A673 (cell line): ENCODE measurements at regions of chr6 and their contacts with region 1.

Region 1: DNA sequence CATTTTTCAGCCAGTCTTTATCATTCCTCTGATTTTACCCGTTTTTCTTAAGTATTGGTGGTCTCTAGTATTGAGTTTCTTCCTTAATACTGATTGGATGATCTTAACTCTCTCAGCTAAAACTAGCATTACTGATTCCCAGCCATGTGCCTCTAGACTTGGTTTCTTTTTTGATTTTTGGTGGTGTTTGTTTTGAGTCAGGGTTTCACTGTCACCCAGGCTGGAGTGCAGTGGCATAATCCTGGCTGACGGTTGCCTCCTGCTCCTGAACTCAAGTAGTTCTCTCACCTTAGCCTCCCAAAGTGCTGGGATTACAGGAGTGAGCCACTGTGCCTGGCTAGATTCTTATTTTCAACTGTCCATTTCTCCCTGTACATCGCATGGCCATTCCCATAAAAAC is 24.9 kb downstream of the DPPA5 start:
- DNase-seq: no peak
- H3K4me3 ChIP-seq: no peak overlapping the region
- H3K27ac ChIP-seq: no peak overlapping the region
- H3K4me1 ChIP-seq: no peaks in the 10 kb centered on the region
- H3K27me3 ChIP-seq: no peaks in the 10 kb centered on the region
- CTCF ChIP-seq: no peak

Region 2: GRCh38 chr6:71533939-71534379 is 1795.2 kb before region 1 on chr6:
- CTCF ChIA-PET with region 1: no interaction called
- POLR2A ChIA-PET with region 1: no interaction called
- intact Hi-C with region 1: loop called (anchors 5 kb)
- DNase-seq: peak; percentile 24
- H3K4me3 ChIP-seq: no peak overlapping the region
- H3K27ac ChIP-seq: no peak overlapping the region
- H3K4me1 ChIP-seq: no peaks in the 10 kb centered on the region
- H3K27me3 ChIP-seq: no peaks in the 10 kb centered on the region
- CTCF ChIP-seq: peak; percentile 69

Region 3: DNA sequence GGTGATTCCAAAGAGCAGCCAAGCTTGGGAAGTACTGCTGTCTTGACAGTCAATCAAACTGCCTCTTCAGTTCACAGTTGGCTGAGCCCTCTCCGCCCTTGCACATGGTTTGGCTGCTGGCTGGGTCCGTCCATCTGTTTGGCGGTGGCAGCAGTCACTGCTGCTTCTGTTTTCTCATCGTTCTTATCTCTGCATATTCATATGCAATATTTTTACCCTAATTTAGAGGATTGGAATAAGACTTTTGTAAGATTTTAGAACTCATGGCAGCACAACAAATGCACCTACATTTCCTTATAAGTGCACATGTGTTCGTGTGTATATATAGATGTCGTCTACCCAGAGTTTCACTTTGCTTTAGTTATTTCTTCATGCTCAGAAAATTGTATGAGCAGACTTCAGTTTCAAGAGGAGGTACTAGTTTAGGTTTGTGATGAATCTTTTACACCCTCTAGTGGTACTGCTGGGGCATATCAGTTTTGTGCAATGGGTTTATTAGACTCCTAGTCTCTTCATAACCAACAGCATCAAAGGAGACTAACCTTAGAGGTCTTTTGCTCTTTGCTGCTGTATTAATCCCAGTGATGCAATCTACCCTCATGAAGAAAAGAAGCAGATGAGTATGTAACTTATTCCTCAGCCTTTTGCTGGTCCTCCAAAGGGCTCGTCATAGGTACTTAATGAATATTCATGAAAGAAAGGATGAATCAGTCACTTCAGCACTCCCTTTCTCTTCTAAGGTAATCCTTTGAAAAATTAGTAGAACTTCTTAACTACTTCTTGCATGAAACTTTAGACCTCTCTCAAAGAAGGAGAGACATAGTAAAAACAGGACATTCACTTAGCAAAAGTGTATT is 148.2 kb before region 1 on chr6:
- CTCF ChIA-PET with region 1: no interaction called
- POLR2A ChIA-PET with region 1: no interaction called
- intact Hi-C with region 1: loop called (anchors 10 kb)
- DNase-seq: peak; percentile 86
- H3K4me3 ChIP-seq: peak overlapping the region; percentile 35
- H3K27ac ChIP-seq: peak overlapping the region; percentile 25
- H3K4me1 ChIP-seq: peaks cover 22% of the 10 kb centered on the region
- H3K27me3 ChIP-seq: no peaks in the 10 kb centered on the region
- CTCF ChIP-seq: peak; percentile 93

Region 4: GRCh38 chr6:73258721-73259120 is 70.5 kb before region 1 on chr6:
- CTCF ChIA-PET with region 1: no interaction called
- POLR2A ChIA-PET with region 1: no interaction called
- intact Hi-C with region 1: no loop called
- DNase-seq: no peak
- H3K4me3 ChIP-seq: no peak overlapping the region
- H3K27ac ChIP-seq: no peak overlapping the region
- H3K4me1 ChIP-seq: peaks cover 6% of the 10 kb centered on the region
- H3K27me3 ChIP-seq: no peaks in the 10 kb centered on the region
- CTCF ChIP-seq: no peak

Region 5: GRCh38 chr6:73285674-73286283 is 43.4 kb before region 1 on chr6:
- CTCF ChIA-PET with region 1: interaction called, 15 read pairs
- POLR2A ChIA-PET with region 1: interaction called, 3 read pairs
- intact Hi-C with region 1: loop called (anchors 5 kb)
- DNase-seq: peak; percentile 67
- H3K4me3 ChIP-seq: no peak overlapping the region
- H3K27ac ChIP-seq: no peak overlapping the region
- H3K4me1 ChIP-seq: no peaks in the 10 kb centered on the region
- H3K27me3 ChIP-seq: no peaks in the 10 kb centered on the region
- CTCF ChIP-seq: peak; percentile 55

Region 6: GRCh38 chr6:73497915-73498314 is 168.7 kb after region 1 on chr6:
- CTCF ChIA-PET with region 1: no interaction called
- POLR2A ChIA-PET with region 1: no interaction called
- intact Hi-C with region 1: no loop called
- DNase-seq: no peak
- H3K4me3 ChIP-seq: no peak overlapping the region
- H3K27ac ChIP-seq: no peak overlapping the region
- H3K4me1 ChIP-seq: no peaks in the 10 kb centered on the region
- H3K27me3 ChIP-seq: no peaks in the 10 kb centered on the region
- CTCF ChIP-seq: no peak